Activated CD4-positive, alpha-beta T cell treated with anti-CD3 and anti-CD28 coated beads, Interleukin-2, amount 10 ng/mL, durations not matched to agents 24 days and 14 days (primary cell): ENCODE measurements at regions of chr19 and their contacts with region 1.

Region 1: GRCh38 chr19:11924886-11925650 is at the start of gene ZNF700:
- DNase-seq: peak; percentile 98
- H3K4me3 Mint-ChIP-seq: peak within 1 kb of the TSS; percentile 93
- H3K27ac Mint-ChIP-seq: peak within 1 kb of the TSS; percentile 97
- H3K4me1 Mint-ChIP-seq: peaks cover 30% of the 10 kb centered on the region
- H3K27me3 Mint-ChIP-seq: no peaks in the 10 kb centered on the region
- total RNA-seq, gene ZNF700: 12.6 and 13.4 TPM in 2 replicates

Region 2: GRCh38 chr19:11814029-11814699 is 110.9 kb before region 1 on chr19 and contains the start of gene ZNF440:
- intact Hi-C with region 1: loop called (anchors 5 kb)
- DNase-seq: peak; percentile 97
- H3K4me3 Mint-ChIP-seq: peak within 1 kb of the TSS; percentile 93
- H3K27ac Mint-ChIP-seq: peak within 1 kb of the TSS; percentile 78
- H3K4me1 Mint-ChIP-seq: peaks cover 9% of the 10 kb centered on the region
- H3K27me3 Mint-ChIP-seq: no peaks in the 10 kb centered on the region
- total RNA-seq, gene ZNF440: 7.4 and 10.5 TPM in 2 replicates

Region 3: GRCh38 chr19:11950312-11950711 is 25.2 kb after region 1 on chr19:
- intact Hi-C with region 1: no loop called
- DNase-seq: no peak
- H3K4me3 Mint-ChIP-seq: no peak overlapping the region
- H3K27ac Mint-ChIP-seq: no peak overlapping the region
- H3K4me1 Mint-ChIP-seq: no peaks in the 10 kb centered on the region
- H3K27me3 Mint-ChIP-seq: no peaks in the 10 kb centered on the region

Region 4: DNA sequence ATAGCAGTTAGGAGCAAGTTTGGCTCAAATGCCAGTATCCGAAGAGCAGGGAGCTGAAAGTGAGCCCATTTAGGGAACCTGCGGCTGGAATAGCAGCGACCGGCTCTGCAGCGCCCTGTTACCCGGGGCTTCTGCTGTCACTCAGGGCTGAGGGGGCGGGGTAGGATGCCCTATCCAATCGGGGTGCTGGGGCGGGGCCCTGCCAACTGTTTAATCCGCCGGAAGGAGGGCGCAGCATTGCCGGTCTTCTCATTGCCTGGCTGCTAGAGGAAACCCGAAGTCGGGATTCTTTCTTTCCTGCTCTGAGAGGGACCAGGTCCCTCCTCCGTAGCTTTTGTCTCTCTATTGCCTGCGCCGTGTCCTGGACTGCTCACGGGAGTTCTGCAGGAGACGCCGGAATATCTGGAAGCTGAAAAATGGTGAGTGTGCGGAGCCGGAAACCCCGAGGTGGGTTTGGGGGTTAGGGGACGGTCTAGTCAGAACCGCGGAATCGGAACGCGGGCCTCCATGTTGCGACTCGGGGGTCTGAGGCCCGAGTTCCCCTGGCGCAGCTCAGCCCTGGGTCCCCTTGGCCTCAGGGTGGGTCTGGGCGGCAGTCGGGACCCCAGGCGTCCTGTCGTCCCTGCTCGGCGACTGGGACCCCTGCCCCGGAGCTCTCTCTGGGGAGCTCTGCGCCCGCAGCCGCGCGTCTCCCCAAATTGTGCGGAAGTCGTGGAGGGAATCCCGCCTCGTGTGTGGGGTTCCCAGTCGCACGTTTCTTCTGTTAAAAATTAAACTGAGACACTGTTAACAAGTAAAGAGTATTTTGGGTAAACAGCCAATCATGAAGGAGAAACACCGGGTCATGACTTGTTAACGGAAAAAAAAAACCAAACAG is 62.6 kb after region 1 on chr19:
- intact Hi-C with region 1: loop called (anchors 1 kb)
- DNase-seq: peak; percentile 96
- H3K4me3 Mint-ChIP-seq: peak overlapping the region; percentile 99
- H3K27ac Mint-ChIP-seq: peak overlapping the region; percentile 96
- H3K4me1 Mint-ChIP-seq: peaks cover 19% of the 10 kb centered on the region
- H3K27me3 Mint-ChIP-seq: no peaks in the 10 kb centered on the region

Region 5: GRCh38 chr19:12112701-12113100 is 187.6 kb after region 1 on chr19:
- intact Hi-C with region 1: no loop called
- DNase-seq: no peak
- H3K4me3 Mint-ChIP-seq: no peak overlapping the region
- H3K27ac Mint-ChIP-seq: no peak overlapping the region
- H3K4me1 Mint-ChIP-seq: no peaks in the 10 kb centered on the region
- H3K27me3 Mint-ChIP-seq: no peaks in the 10 kb centered on the region

Region 6: GRCh38 chr19:12139885-12140547 is 214.9 kb after region 1 on chr19 and contains the start of gene ZNF20:
- intact Hi-C with region 1: loop called (anchors 1 kb)
- DNase-seq: peak; percentile 97
- H3K4me3 Mint-ChIP-seq: peak within 1 kb of the TSS; percentile 90
- H3K27ac Mint-ChIP-seq: peak within 1 kb of the TSS; percentile 84
- H3K4me1 Mint-ChIP-seq: peaks cover 28% of the 10 kb centered on the region
- H3K27me3 Mint-ChIP-seq: no peaks in the 10 kb centered on the region
- total RNA-seq, gene ZNF20: 2.0 and 2.1 TPM in 2 replicates

Region 7: DNA sequence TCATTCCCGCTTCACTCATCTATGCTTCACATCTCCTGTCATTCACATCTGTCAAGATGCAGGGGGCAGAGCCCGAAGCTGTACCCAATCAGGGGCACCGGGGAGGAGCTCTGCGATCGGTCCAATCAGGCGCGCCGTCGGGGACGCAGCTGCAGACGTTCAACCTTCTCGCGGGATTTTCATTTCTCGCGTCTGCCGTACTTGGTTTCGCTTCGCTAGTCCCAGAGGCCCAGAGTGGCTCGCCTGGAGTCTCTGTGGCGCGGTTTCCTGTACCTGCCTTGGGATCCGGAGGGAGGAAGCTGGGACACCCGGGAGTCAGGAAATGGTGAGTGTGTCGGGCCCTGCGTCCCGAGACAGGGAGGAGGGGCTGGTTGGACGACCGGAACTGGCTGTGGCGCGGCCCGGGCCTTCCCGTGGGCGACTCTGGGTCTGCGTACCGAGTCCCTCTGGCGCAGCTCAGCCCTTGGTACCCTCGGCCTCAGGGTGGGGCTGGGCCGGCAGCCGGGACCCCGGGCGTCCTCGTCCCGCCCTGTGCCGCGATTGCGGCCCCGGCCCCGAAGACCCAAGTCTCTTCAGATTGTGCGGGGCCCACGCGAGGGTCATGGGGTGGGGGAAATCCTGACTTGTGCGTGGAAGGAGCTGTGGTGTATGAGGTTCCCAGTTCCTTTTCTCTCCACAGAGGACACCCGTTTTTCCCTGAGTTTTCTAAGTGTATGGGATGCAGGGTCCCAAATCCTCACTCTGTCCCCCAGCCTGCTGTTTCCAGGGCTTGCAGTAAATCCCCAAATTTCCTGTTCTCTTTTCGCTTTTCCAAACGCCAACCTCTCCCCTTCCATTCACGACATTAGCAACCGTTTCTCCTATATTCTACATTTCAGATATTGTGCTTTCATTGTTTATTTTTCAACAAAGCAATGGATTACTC is 238.1 kb after region 1 on chr19 and contains the start of gene ZNF136:
- intact Hi-C with region 1: no loop called
- DNase-seq: peak; percentile 98
- H3K4me3 Mint-ChIP-seq: peak within 1 kb of the TSS; percentile 95
- H3K27ac Mint-ChIP-seq: peak within 1 kb of the TSS; percentile 96
- H3K4me1 Mint-ChIP-seq: peaks cover 28% of the 10 kb centered on the region
- H3K27me3 Mint-ChIP-seq: no peaks in the 10 kb centered on the region
- total RNA-seq, gene ZNF136: 9.4 and 10.3 TPM in 2 replicates